B cell (primary cell): ENCODE measurements at regions of chr19 and their contacts with region 1.

Region 1: GRCh38 chr19:13060964-13061927 is 41.4 kb downstream of the LYL1 start:
- DNase-seq: peak; percentile 86
- ATAC-seq: peak; percentile 97
- H3K4me3 ChIP-seq: peak overlapping the region; percentile 4 to 60 (median 57)
- H3K4me3 Mint-ChIP-seq: peak overlapping the region; percentile 88
- H3K27ac ChIP-seq: no peak overlapping the region
- H3K27ac Mint-ChIP-seq: peak overlapping the region; percentile 32
- H3K4me1 ChIP-seq: peaks cover 7 to 17% of the 10 kb centered on the region in 2 donors
- H3K4me1 Mint-ChIP-seq: peaks cover 6% of the 10 kb centered on the region
- H3K27me3 ChIP-seq: peaks cover 0 to 22% (median 12%) of the 10 kb centered on the region in 4 experiments
- H3K27me3 Mint-ChIP-seq: peaks cover 21% of the 10 kb centered on the region
- CTCF ChIP-seq: peak; percentile 99

Region 2: GRCh38 chr19:12974301-12975220 is 86.7 kb before region 1 on chr19:
- CTCF ChIA-PET with region 1: interaction called, 161 read pairs
- POLR2A ChIA-PET with region 1: no interaction called
- intact Hi-C with region 1: loop called (anchors 1 kb)
- DNase-seq: no peak
- ATAC-seq: no peak
- H3K4me3 ChIP-seq: no peak overlapping the region
- H3K4me3 Mint-ChIP-seq: no peak overlapping the region
- H3K27ac ChIP-seq: no peak overlapping the region
- H3K27ac Mint-ChIP-seq: no peak overlapping the region
- H3K4me1 ChIP-seq: peaks cover 0 to 5% of the 10 kb centered on the region in 2 donors
- H3K4me1 Mint-ChIP-seq: peaks cover 6% of the 10 kb centered on the region
- H3K27me3 ChIP-seq: peaks cover 0 to 14% (median 1%) of the 10 kb centered on the region in 4 experiments
- H3K27me3 Mint-ChIP-seq: peaks cover 12% of the 10 kb centered on the region
- CTCF ChIP-seq: no peak

Region 3: GRCh38 chr19:12983542-12984142 is 77.6 kb before region 1 on chr19:
- CTCF ChIA-PET with region 1: interaction called, 161 read pairs
- POLR2A ChIA-PET with region 1: interaction called, 3 read pairs
- intact Hi-C with region 1: loop called (anchors 1 kb)
- DNase-seq: peak; percentile 93
- ATAC-seq: peak; percentile 77
- H3K4me3 ChIP-seq: peak overlapping the region in 4 of 5 experiments; percentile 24 to 62 (median 36)
- H3K4me3 Mint-ChIP-seq: no peak overlapping the region
- H3K27ac ChIP-seq: no peak overlapping the region
- H3K27ac Mint-ChIP-seq: no peak overlapping the region
- H3K4me1 ChIP-seq: peaks cover 30 to 43% of the 10 kb centered on the region in 2 donors
- H3K4me1 Mint-ChIP-seq: peaks cover 15% of the 10 kb centered on the region
- H3K27me3 ChIP-seq: peaks cover 0 to 10% (median 2%) of the 10 kb centered on the region in 4 experiments
- H3K27me3 Mint-ChIP-seq: peaks cover 4% of the 10 kb centered on the region
- CTCF ChIP-seq: peak; percentile 91

Region 4: DNA sequence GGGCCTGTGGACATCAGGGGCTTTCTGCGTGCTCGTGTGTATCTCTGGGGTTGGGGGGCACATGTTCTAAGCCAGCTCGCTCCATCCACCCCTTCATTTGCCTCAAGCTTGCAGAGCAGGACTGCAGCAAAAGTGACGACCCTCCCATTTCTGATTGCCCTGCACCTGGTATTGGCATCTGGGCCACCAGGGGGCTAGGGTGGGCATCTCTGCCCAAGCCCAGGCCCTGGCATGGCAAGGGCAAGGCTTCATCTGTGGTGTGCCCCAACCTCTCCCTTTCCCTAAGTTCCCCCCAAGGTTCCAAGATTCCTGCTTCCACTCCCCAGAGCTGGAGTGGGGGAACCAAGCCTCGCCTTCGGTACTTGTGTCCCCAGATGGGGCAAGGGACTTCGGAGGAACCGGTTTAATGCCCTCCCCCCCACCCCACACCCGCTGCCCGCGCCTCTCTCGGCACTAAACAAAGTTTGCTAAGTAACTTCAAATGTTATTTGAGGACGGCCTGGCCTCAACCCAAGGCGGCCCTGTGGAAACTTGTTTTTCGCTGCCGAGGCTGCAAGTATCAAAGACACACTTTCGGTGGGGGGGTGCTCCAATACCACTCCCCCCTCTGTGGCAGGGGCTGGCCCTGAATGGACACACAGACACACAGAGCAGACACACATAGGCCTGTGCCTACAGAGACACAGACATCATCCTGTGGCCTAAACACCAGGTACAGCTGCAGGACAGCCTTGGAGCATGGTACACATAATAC is 53.8 kb before region 1 on chr19:
- CTCF ChIA-PET with region 1: interaction called, 12 read pairs
- POLR2A ChIA-PET with region 1: no interaction called
- intact Hi-C with region 1: no loop called
- DNase-seq: no peak
- ATAC-seq: no peak
- H3K4me3 ChIP-seq: no peak overlapping the region
- H3K4me3 Mint-ChIP-seq: no peak overlapping the region
- H3K27ac ChIP-seq: no peak overlapping the region
- H3K27ac Mint-ChIP-seq: no peak overlapping the region
- H3K4me1 ChIP-seq: peaks cover 10 to 20% of the 10 kb centered on the region in 2 donors
- H3K4me1 Mint-ChIP-seq: peaks cover under 1% of the 10 kb centered on the region
- H3K27me3 ChIP-seq: peaks cover 0 to 42% (median 21%) of the 10 kb centered on the region in 4 experiments
- H3K27me3 Mint-ChIP-seq: peaks cover 39% of the 10 kb centered on the region
- CTCF ChIP-seq: no peak

Region 5: GRCh38 chr19:13012690-13013608 is 48.3 kb before region 1 on chr19:
- CTCF ChIA-PET with region 1: interaction called, 10 read pairs
- POLR2A ChIA-PET with region 1: no interaction called
- intact Hi-C with region 1: no loop called
- DNase-seq: peak; percentile 70
- ATAC-seq: peak; percentile 49
- H3K4me3 ChIP-seq: peak overlapping the region in 4 of 5 experiments; percentile 23 to 71 (median 55)
- H3K4me3 Mint-ChIP-seq: peak overlapping the region; percentile 92
- H3K27ac ChIP-seq: no peak overlapping the region
- H3K27ac Mint-ChIP-seq: peak overlapping the region; percentile 63
- H3K4me1 ChIP-seq: peaks cover 35 to 49% of the 10 kb centered on the region in 2 donors
- H3K4me1 Mint-ChIP-seq: peaks cover 38% of the 10 kb centered on the region
- H3K27me3 ChIP-seq: peaks cover 0 to 72% (median 38%) of the 10 kb centered on the region in 4 experiments
- H3K27me3 Mint-ChIP-seq: peaks cover 65% of the 10 kb centered on the region
- CTCF ChIP-seq: no peak

Region 6: GRCh38 chr19:13033819-13034611 is 27.2 kb before region 1 on chr19:
- CTCF ChIA-PET with region 1: interaction called, 20 read pairs
- POLR2A ChIA-PET with region 1: no interaction called
- intact Hi-C with region 1: no loop called
- DNase-seq: peak; percentile 56
- ATAC-seq: peak; percentile 83
- H3K4me3 ChIP-seq: no peak overlapping the region
- H3K4me3 Mint-ChIP-seq: no peak overlapping the region
- H3K27ac ChIP-seq: no peak overlapping the region
- H3K27ac Mint-ChIP-seq: no peak overlapping the region
- H3K4me1 ChIP-seq: no peaks in the 10 kb centered on the region
- H3K4me1 Mint-ChIP-seq: peaks cover 1% of the 10 kb centered on the region
- H3K27me3 ChIP-seq: peaks cover 0 to 10% (median 4%) of the 10 kb centered on the region in 4 experiments
- H3K27me3 Mint-ChIP-seq: peaks cover 17% of the 10 kb centered on the region
- CTCF ChIP-seq: peak; percentile 73

Region 7: DNA sequence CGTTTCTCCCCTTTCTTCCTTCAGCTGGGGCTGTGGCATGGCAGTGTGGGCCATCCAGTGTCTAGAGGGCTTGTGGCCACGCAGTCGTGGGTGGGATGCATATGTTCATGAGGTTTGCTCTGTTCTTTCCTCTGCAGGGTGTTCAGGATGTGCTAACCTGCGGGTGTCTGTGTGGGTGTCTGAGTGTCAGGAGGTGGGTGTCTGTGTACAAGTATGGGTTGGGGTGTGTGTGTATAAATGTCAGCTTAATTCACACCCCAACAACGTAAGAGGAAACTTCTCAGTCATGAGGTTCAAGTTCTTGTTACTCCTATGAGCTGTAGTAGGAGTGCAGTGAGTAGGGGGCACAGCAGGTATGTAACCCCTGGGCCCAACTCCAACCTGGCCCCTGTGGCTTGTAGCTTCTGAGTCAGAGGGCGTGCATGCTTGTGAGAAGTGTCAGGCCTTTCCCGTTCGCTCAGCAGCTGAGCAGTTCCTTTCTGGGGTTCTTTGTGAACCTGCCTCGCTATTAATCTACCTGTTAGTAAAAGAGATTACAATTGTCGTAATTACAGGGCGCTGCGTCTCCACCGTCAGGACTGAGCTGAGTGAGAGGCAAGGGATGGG is 16.9 kb before region 1 on chr19:
- CTCF ChIA-PET with region 1: interaction called, 11 read pairs
- POLR2A ChIA-PET with region 1: no interaction called
- intact Hi-C with region 1: no loop called
- DNase-seq: no peak
- ATAC-seq: no peak
- H3K4me3 ChIP-seq: no peak overlapping the region
- H3K4me3 Mint-ChIP-seq: no peak overlapping the region
- H3K27ac ChIP-seq: no peak overlapping the region
- H3K27ac Mint-ChIP-seq: no peak overlapping the region
- H3K4me1 ChIP-seq: peaks cover 0 to 4% of the 10 kb centered on the region in 2 donors
- H3K4me1 Mint-ChIP-seq: no peaks in the 10 kb centered on the region
- H3K27me3 ChIP-seq: no peaks in the 10 kb centered on the region
- H3K27me3 Mint-ChIP-seq: peaks cover 19% of the 10 kb centered on the region
- CTCF ChIP-seq: no peak

Region 8: DNA sequence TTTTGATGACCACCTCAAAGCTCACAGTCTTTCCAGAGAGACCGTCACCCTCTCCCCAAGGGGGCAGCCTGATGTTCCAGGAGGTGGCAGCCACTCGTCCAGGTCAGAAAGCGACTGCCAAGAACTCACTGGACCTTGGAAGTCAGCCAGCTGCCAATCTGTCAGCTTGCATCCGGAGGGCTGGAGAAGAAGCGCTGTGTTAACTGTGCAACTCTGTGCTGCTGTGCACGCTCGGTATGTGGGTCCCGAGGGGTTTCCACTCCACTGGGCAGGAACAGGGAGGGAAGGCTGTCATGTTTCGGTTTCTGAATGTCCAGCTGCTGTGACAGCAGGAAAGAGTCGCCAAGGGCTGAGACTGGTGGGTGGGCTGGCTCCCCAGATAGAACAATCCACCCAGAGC is 355.8 kb after region 1 on chr19:
- CTCF ChIA-PET with region 1: no interaction called
- POLR2A ChIA-PET with region 1: no interaction called
- intact Hi-C with region 1: no loop called
- DNase-seq: no peak
- ATAC-seq: no peak
- H3K4me3 ChIP-seq: no peak overlapping the region
- H3K4me3 Mint-ChIP-seq: no peak overlapping the region
- H3K27ac ChIP-seq: no peak overlapping the region
- H3K27ac Mint-ChIP-seq: no peak overlapping the region
- H3K4me1 ChIP-seq: peaks cover 4 to 6% of the 10 kb centered on the region in 2 donors
- H3K4me1 Mint-ChIP-seq: peaks cover 8% of the 10 kb centered on the region
- H3K27me3 ChIP-seq: peaks cover 0 to 7% (median 0%) of the 10 kb centered on the region in 4 experiments
- H3K27me3 Mint-ChIP-seq: peaks cover 21% of the 10 kb centered on the region
- CTCF ChIP-seq: no peak